ENCODE measurements at regions of chrX and their contacts with region 1.

Region 1: GRCh38 chrX:1468250-1468772 is 15.6 kb upstream of the ASMTL start:
- DNase-seq: peak; percentile 72
- H3K4me3 Mint-ChIP-seq: peak overlapping the region; percentile 60
- H3K27ac Mint-ChIP-seq: peak overlapping the region; percentile 94
- H3K4me1 Mint-ChIP-seq: peaks cover 72% of the 10 kb centered on the region
- H3K27me3 Mint-ChIP-seq: no peaks in the 10 kb centered on the region

Region 2: GRCh38 chrX:1481636-1482529 is 13.6 kb after region 1 on chrX:
- intact Hi-C with region 1: loop called (anchors 1 kb)
- DNase-seq: peak; percentile 83
- H3K4me3 Mint-ChIP-seq: peak overlapping the region; percentile 87
- H3K27ac Mint-ChIP-seq: peak overlapping the region; percentile 99
- H3K4me1 Mint-ChIP-seq: peaks cover 61% of the 10 kb centered on the region
- H3K27me3 Mint-ChIP-seq: no peaks in the 10 kb centered on the region

Region 3: GRCh38 chrX:1500701-1501624 is 32.7 kb after region 1 on chrX:
- intact Hi-C with region 1: loop called (anchors 5 kb)
- DNase-seq: peak; percentile 4
- H3K4me3 Mint-ChIP-seq: no peak overlapping the region
- H3K27ac Mint-ChIP-seq: peak overlapping the region; percentile 63
- H3K4me1 Mint-ChIP-seq: peaks cover 23% of the 10 kb centered on the region
- H3K27me3 Mint-ChIP-seq: no peaks in the 10 kb centered on the region

Measured in activated T-helper 2 cell treated with anti-CD3 and anti-CD28 coated beads, Interferon-gamma antibody, Interleukin-2, Interleukin-4, amounts not matched to agents 10 μg/mL and 5 μg/mL and 100 μg/mL, durations not matched to agents 14 hours and 24 hours and 36 hours (primary cell).